ENCODE measurements at regions of chr14 and their contacts with region 1.

Region 1: GRCh38 chr14:20873370-20874177 is 17.6 kb upstream of the RNASE3 start:
- DNase-seq: peak; percentile 70
- ATAC-seq: peak; percentile 75
- H3K4me3 ChIP-seq: no peak overlapping the region
- H3K27ac ChIP-seq: no peak overlapping the region
- H3K4me1 ChIP-seq: no peaks in the 10 kb centered on the region
- H3K27me3 ChIP-seq: peaks cover 57% of the 10 kb centered on the region
- CTCF ChIP-seq: peak; percentile 91

Region 2: DNA sequence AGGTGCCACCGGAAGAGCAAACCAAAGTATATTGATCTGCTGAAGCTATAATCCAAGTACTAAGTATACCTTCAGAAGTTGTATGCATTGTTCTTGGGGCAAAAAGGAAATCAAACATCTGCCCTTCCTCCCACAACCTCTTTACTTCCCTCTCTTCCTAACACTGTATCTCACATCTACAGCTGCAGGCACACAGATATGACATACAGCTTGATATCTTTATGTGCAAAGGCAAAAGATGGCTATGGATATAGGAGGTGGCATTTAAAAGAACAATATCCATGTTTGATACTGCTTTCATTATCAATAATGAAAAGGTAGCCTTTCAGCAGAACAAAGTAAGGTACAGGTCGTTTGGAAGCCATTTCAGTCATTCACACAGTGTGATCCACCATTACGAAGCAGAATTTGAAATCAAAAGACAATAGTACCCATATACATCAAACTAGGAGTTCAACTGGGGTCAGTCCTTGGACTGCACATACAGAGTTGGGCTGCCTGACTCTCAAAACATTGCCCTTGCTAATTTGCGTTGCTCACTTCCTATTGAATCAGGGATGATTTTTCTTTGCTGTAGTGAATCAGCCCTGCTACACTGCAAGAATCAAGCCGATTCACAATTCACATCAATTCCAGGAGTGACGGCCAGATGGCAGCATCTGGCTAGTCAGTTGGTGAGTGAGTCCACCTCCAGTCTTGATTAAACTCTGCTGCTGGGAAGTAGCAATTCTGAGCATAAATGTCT is 176.1 kb before region 1 on chr14:
- CTCF ChIA-PET with region 1: no interaction called
- POLR2A ChIA-PET with region 1: no interaction called
- intact Hi-C with region 1: loop called (anchors 1 kb)
- DNase-seq: peak; percentile 95
- ATAC-seq: peak; percentile 98
- H3K4me3 ChIP-seq: no peak overlapping the region
- H3K27ac ChIP-seq: no peak overlapping the region
- H3K4me1 ChIP-seq: peaks cover 7% of the 10 kb centered on the region
- H3K27me3 ChIP-seq: no peaks in the 10 kb centered on the region
- CTCF ChIP-seq: peak; percentile 92

Region 3: DNA sequence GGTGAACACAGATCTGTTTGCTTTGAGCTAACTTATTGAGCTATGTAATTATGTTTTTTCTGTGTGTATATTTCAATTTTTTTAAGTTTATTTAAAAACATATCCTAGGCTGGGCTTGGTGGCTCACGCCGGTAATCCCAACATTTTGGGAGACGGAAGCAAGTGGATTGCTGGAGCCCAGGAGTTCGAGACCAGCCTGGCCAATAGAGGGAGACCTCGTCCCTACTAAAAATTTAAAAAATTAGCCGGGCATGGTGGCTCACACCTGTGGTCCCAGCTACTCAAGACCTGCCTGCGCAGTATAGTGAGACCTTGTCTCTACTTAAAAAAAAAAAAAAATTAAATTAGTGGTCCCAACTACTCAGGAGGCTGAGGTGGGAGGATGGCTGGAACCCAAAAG is 54.7 kb before region 1 on chr14:
- CTCF ChIA-PET with region 1: no interaction called
- POLR2A ChIA-PET with region 1: no interaction called
- intact Hi-C with region 1: loop called (anchors 10 kb)
- DNase-seq: peak; percentile 53
- ATAC-seq: peak; percentile 55; the same call in 1 of the 2 replicates
- H3K4me3 ChIP-seq: no peak overlapping the region
- H3K27ac ChIP-seq: no peak overlapping the region
- H3K4me1 ChIP-seq: no peaks in the 10 kb centered on the region
- H3K27me3 ChIP-seq: peaks cover 24% of the 10 kb centered on the region
- CTCF ChIP-seq: peak; percentile 64; the same call in 1 of the 2 replicates

Region 4: DNA sequence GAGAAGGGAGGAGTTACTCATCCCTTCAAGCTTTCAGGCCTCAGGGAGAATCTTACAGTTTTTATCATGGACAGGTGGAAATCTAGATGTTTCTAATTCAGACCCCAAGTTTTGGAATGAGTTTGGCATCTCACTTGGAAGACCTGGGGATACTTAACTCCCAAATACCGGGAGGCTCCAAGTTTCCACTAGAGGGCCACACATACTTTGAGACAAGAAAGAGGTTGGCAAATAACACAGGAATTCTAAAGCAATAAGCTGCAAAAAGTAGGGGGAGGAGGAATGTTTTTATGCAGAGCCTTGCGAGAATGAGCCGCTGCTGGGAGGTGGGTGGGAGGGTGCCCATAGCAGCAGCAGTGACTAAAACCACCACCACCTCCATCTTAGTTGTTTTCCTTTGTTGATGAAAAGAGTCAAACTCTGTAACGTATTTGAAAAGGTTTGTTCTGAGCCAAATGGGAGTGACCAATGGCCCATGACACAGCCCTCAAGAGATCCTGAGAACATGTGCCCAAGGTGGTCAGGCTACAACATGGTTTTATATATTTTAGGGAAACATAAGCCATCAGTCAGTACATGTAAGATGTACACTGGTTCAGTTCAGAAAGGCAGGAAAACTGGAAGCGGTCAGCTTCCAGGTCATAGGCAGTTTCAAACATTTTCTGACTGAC is 36.8 kb before region 1 on chr14:
- CTCF ChIA-PET with region 1: interaction called, 3 read pairs
- POLR2A ChIA-PET with region 1: no interaction called
- intact Hi-C with region 1: loop called (anchors 5 kb)
- DNase-seq: peak; percentile 84
- ATAC-seq: peak; percentile 85
- H3K4me3 ChIP-seq: no peak overlapping the region
- H3K27ac ChIP-seq: no peak overlapping the region
- H3K4me1 ChIP-seq: peaks cover 4% of the 10 kb centered on the region; the same call in 1 of the 2 replicates
- H3K27me3 ChIP-seq: no peaks in the 10 kb centered on the region
- CTCF ChIP-seq: peak; percentile 90

Region 5: GRCh38 chr14:20970983-20971704 is 97.6 kb after region 1 on chr14:
- CTCF ChIA-PET with region 1: interaction called, 3 read pairs
- POLR2A ChIA-PET with region 1: no interaction called
- intact Hi-C with region 1: loop called (anchors 1 kb)
- DNase-seq: peak; percentile 89
- ATAC-seq: peak; percentile 87
- H3K4me3 ChIP-seq: peak overlapping the region; percentile 77
- H3K27ac ChIP-seq: no peak overlapping the region
- H3K4me1 ChIP-seq: peaks cover 9% of the 10 kb centered on the region
- H3K27me3 ChIP-seq: peaks cover 22% of the 10 kb centered on the region; the same call in 1 of the 2 replicates
- CTCF ChIP-seq: peak; percentile 89